MCF 10A (cell line): ENCODE measurements at regions of chr22 and their contacts with region 1.

Region 1: DNA sequence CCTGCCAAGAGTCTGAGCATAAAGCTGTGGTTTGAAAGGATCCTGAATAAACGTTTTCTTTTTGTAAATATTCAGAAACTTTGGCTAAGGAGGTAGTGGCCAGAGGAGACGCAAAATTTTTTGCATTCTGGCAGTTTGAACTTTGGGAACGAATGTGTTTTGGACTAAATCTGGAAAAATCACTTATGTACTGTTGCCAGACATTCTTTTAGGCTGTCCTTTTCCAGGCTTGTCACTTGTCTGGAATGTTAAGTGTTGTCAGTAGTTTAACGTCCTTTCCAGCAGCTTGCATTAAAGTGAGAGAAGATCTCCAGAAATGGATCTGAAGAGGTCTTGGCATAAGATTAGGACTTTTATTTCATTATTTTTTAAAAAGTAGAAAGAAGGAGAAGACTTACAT is 18.5 kb downstream of the SPECC1L start:
- DNase-seq: peak; percentile 26
- H3K4me3 Mint-ChIP-seq: peak overlapping the region; percentile 7
- H3K27ac Mint-ChIP-seq: peak overlapping the region; percentile 59
- H3K4me1 Mint-ChIP-seq: peaks cover 34% of the 10 kb centered on the region
- H3K27me3 Mint-ChIP-seq: no peaks in the 10 kb centered on the region
- CTCF ChIP-seq: no peak

Region 2: GRCh38 chr22:24270638-24271408 is 18.3 kb before region 1 on chr22 and contains the start of gene SPECC1L:
- CTCF ChIA-PET with region 1: interaction called, 4 read pairs
- POLR2A ChIA-PET with region 1: interaction called, 10 read pairs
- intact Hi-C with region 1: no loop called
- DNase-seq: peak; percentile 91
- H3K4me3 Mint-ChIP-seq: peak within 1 kb of the TSS; percentile 84
- H3K27ac Mint-ChIP-seq: peak within 1 kb of the TSS; percentile 91
- H3K4me1 Mint-ChIP-seq: peaks cover 15% of the 10 kb centered on the region
- H3K27me3 Mint-ChIP-seq: no peaks in the 10 kb centered on the region
- CTCF ChIP-seq: no peak
- total RNA-seq, gene SPECC1L: 48.7 and 60.4 TPM in 2 replicates

Region 3: GRCh38 chr22:24303007-24303406 is 13.9 kb after region 1 on chr22:
- CTCF ChIA-PET with region 1: interaction called, 4 read pairs
- POLR2A ChIA-PET with region 1: interaction called, 12 read pairs
- intact Hi-C with region 1: no loop called
- DNase-seq: no peak
- H3K4me3 Mint-ChIP-seq: no peak overlapping the region
- H3K27ac Mint-ChIP-seq: peak overlapping the region; percentile 17
- H3K4me1 Mint-ChIP-seq: peaks cover 27% of the 10 kb centered on the region
- H3K27me3 Mint-ChIP-seq: no peaks in the 10 kb centered on the region
- CTCF ChIP-seq: no peak

Region 4: GRCh38 chr22:24359452-24360120 is 70.5 kb after region 1 on chr22:
- CTCF ChIA-PET with region 1: no interaction called
- POLR2A ChIA-PET with region 1: no interaction called
- intact Hi-C with region 1: no loop called
- DNase-seq: no peak
- H3K4me3 Mint-ChIP-seq: no peak overlapping the region
- H3K27ac Mint-ChIP-seq: no peak overlapping the region
- H3K4me1 Mint-ChIP-seq: no peaks in the 10 kb centered on the region
- H3K27me3 Mint-ChIP-seq: no peaks in the 10 kb centered on the region
- CTCF ChIP-seq: no peak